ENCODE measurements at regions of chr14 and their contacts with region 1.

Region 1: DNA sequence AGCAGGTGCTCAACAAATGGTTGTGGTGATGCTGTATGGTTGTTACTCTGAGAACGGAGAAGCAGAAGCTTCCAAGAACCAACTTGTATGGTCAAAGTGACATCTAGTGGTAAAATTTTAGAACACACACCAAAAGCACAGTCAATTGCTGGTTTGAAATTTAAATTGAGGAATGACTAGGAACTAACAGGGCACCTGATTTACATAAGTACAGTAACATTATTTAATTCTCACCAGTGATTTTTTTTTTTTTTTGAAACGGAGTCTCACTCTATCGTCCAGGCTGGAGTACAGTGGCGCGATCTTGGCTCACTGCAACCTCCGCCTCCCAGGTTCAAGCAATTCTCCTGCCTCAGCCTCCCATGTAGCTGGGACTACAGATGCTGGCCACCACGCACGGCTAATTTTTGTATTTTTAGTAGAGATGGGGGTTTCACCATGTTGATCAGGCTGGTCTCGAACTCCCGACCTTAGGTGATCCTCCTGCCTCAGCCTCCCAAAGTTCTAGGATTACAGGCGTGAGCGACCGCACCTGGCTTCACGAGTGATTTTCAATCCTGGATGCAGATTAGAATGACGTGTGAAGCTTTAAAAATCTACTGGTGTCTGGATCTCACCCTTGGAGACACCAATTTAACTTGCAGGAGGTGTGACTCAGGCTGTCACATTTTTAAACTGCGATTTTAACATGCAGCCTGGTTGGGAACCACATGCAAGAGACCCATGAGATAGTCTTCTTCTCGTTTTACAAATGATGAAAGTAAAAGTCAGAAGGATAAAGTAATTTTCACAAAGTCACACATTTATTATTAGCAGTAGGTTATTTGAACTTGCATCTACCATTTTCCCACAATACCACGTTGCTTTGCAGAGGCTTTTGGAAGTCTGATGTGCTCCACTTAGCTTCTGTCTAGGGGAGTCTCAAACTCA is 14.1 kb upstream of the NUMB start:
- DNase-seq: peak; percentile 83
- H3K4me3 ChIP-seq: no peak overlapping the region
- H3K27ac ChIP-seq: no peak overlapping the region
- H3K4me1 ChIP-seq: peaks cover 24% of the 10 kb centered on the region
- H3K27me3 ChIP-seq: no peaks in the 10 kb centered on the region

Region 2: DNA sequence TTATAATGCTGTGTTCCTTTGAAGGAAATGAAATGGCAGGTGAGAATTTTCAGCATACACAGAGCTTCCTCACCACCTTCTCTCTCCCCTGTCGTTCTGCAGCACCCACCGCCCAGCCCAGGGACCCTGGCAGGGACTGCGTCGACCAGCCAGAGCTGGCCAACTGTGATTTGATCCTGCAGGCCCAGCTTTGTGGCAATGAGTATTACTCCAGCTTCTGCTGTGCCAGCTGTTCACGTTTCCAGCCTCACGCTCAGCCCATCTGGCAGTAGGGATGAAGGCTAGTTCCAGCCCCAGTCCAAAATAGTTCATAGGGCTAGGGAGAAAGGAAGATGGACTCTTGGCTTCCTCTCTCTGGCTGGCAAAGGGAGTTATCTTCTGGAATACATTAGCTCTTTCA is 200.1 kb before region 1 on chr14:
- in situ Hi-C with region 1: no loop called
- DNase-seq: no peak
- H3K4me3 ChIP-seq: no peak overlapping the region
- H3K27ac ChIP-seq: no peak overlapping the region
- H3K4me1 ChIP-seq: no peaks in the 10 kb centered on the region
- H3K27me3 ChIP-seq: no peaks in the 10 kb centered on the region

Region 3: GRCh38 chr14:73295198-73295796 is 177.2 kb before region 1 on chr14:
- in situ Hi-C with region 1: loop called (anchors 5 kb)
- DNase-seq: peak; percentile 72
- H3K4me3 ChIP-seq: no peak overlapping the region
- H3K27ac ChIP-seq: no peak overlapping the region
- H3K4me1 ChIP-seq: no peaks in the 10 kb centered on the region
- H3K27me3 ChIP-seq: no peaks in the 10 kb centered on the region